Endothelial cell of umbilical vein (primary cell): ENCODE measurements at regions of chr19 and their contacts with region 1.

Region 1: DNA sequence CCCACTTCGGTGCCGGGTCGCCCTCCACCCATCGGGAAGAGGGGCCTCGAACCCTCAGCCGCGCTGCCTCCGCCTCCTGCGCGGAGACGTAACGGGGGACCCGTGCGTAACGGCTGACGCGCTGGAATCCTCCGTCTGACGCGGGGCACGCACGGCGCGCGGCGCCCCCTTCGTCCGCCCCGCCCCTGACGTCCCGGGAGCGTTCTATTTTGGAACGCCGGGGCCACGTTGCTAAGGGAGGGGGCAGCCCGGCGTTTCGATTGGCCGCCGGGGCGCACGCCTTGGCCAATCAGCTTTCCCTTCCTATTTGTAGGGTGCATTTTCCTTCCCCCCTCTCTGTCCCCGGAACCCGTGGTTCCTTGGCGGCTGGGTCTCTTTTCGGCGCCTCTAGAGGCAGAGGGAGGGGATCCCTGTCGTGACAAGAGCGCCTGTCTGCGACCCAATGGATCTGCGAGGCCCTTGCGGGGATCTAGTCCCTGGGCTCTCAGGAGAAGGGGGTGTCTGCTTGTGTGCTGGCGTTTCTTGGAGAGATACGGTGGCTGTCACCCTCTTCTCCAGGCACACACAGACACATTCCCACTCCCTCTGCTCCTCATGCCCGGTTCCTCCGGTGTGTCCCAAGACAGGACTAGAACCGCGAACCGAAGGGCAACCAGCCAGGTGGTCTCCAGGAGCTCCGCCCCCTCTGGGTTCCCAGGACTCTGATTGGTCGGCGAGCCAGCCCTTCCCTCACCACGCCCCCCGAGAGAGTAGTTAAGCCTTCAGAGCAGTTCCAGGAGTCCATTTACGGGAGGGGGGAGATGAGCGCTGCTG is 1.5 kb downstream of the FOSB start:
- DNase-seq: peak; percentile 95
- H3K4me3 ChIP-seq: peak overlapping the region; percentile 45 to 71 (median 48)
- H3K27ac ChIP-seq: peak overlapping the region; percentile 86
- H3K4me1 ChIP-seq: peaks cover 18% of the 10 kb centered on the region
- H3K27me3 ChIP-seq: no peaks in the 10 kb centered on the region
- CTCF ChIP-seq: no peak
- POLR2A ChIP-seq: no peak

Region 2: GRCh38 chr19:45446320-45446763 is 23.0 kb before region 1 on chr19:
- CTCF ChIA-PET with region 1: interaction called, 891 read pairs
- POLR2A ChIA-PET with region 1: no interaction called
- dilution Hi-C with region 1: no loop called
- intact Hi-C with region 1: loop called (anchors 1 kb)
- DNase-seq: peak; percentile 47
- H3K4me3 ChIP-seq: no peak overlapping the region
- H3K27ac ChIP-seq: no peak overlapping the region
- H3K4me1 ChIP-seq: peaks cover 34% of the 10 kb centered on the region
- H3K27me3 ChIP-seq: no peaks in the 10 kb centered on the region
- CTCF ChIP-seq: peak; percentile 42
- POLR2A ChIP-seq: no peak

Region 3: DNA sequence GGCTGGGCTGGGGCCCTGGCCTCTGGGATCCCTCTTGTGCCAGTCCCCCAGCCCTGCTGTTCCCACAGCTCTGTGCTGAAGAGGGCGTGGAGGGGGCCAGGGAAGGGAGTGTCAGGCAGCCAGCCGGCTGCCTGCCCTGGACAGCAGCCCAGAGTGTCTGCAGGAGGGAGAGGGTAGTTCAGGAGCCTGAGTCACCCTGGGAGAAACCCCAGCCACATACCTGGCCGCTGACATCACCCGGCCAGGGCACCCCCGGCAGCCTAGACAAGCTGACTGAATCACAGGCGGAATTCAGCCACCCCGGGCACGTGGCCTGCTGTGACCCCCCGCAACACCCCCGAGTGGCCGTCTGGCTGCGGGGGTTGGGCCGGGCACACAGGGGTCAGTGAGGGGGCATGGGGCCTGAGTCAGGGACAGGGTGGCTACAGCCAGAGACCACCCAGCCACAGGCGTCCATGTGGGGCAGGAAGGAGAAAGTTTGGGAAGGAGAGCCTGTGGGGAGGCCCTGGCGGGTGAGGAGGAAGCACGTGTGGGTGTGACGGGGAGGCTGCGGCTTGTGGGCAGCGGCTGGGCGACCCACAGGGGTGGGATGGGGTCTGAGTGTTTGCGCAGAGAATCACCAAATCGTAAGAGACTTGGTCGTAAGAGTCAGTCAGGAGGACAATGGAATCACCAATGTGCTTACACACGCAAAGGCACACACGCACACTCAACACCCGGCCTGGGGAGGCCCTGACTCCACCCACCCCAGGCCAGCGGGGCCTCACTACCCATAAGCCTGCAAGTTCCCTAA is 13.4 kb before region 1 on chr19:
- CTCF ChIA-PET with region 1: interaction called, 9 read pairs
- POLR2A ChIA-PET with region 1: interaction called, 9 read pairs
- dilution Hi-C with region 1: no loop called
- intact Hi-C with region 1: loop called (anchors 1 kb)
- DNase-seq: peak; percentile 98
- H3K4me3 ChIP-seq: no peak overlapping the region
- H3K27ac ChIP-seq: peak overlapping the region; percentile 90
- H3K4me1 ChIP-seq: peaks cover 19% of the 10 kb centered on the region
- H3K27me3 ChIP-seq: no peaks in the 10 kb centered on the region
- CTCF ChIP-seq: no peak
- POLR2A ChIP-seq: no peak

Region 4: DNA sequence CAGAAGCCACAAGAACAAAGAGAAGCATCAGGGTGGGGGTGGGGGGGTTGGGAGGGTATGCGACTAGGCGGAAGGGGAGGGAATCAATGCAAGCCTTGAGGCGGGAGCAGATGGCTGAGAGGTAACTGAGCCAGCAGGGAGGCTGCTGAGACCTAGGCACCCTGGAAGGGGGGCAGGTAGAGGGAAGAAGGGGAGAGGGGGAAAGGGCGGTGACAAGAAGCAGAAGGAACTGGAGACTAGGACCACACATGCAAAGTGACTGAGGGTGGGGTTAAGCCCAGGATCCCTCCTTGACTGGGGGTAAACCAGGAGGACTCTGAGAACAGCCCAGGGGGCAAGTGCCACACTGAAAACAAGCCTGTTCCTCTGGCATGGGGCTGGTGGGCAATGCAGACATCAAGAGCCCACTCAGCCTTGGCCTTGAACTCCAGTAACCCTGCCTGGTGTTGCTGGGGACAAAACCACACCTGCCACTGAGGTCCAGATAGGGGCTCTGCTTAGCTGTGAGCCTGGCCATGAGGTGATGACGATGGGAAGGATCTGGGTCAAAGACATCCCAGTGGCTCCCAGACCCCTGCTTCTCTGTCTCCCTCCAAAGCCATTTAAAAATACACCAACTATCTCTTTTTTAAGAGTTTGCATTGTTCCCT is 94.9 kb after region 1 on chr19:
- CTCF ChIA-PET with region 1: no interaction called
- POLR2A ChIA-PET with region 1: no interaction called
- dilution Hi-C with region 1: no loop called
- intact Hi-C with region 1: no loop called
- DNase-seq: no peak
- H3K4me3 ChIP-seq: no peak overlapping the region
- H3K27ac ChIP-seq: no peak overlapping the region
- H3K4me1 ChIP-seq: peaks cover 8% of the 10 kb centered on the region
- H3K27me3 ChIP-seq: no peaks in the 10 kb centered on the region
- CTCF ChIP-seq: no peak
- POLR2A ChIP-seq: no peak